Panc1 (cell line): ENCODE measurements at regions of chr17 and their contacts with region 1.

Region 1: DNA sequence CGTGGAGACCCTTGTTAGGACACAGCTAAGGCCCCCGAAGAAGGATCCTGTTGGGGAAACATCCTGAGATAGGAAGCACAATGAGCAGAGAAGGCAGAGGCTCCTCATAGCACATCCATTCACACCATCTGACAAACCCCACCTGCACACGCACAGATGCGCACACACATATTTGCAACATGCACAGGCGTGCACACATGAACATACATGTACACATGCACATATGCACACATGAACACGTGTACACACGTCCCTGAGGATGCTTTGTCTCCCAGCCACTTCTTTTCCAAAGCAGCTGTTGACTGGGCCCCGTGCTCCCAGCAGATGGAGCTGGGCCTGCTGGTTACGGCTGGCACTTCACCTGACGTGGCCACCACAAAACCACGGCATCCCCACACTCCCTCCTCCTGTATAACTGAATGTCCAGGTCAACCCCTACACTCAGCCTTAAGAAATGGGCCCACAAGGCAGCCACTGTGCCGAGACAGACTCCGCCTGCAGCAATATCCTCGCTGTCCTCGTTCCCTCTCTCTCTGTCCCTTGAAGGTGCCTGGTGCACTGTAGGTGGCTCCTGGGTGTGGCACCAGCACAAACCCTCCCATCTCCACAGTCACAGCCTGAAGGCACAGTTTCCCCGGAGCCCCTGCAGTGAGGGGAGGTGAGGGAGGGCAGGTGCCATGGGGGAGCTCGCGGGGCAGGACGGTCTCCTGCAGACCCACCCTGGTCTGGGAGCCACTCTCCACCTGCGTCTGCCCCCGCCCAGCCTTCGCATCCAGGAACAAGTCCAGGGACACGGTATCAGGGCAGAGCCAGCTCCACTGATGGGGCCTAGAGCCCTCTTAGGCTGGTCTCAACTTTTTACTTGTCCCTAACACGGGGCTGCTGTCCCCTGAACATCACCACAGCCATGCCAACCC is 183.0 kb downstream of the RBFOX3 start:
- DNase-seq: no peak
- ATAC-seq: 0 out of 2 replicates have a peak, but pooled peaks have one; percentile 52
- H3K4me3 ChIP-seq: no peak overlapping the region
- H3K27ac ChIP-seq: no peak overlapping the region
- H3K4me1 ChIP-seq: no peaks in the 10 kb centered on the region
- H3K27me3 ChIP-seq: peaks cover 6% of the 10 kb centered on the region; the same call in 1 of the 2 replicates
- CTCF ChIP-seq: no peak

Region 2: GRCh38 chr17:79658811-79659207 is 230.9 kb after region 1 on chr17:
- CTCF ChIA-PET with region 1: no interaction called
- POLR2A ChIA-PET with region 1: no interaction called
- in situ Hi-C with region 1: loop called (anchors 25 kb)
- intact Hi-C with region 1: no loop called
- DNase-seq: no peak
- ATAC-seq: peak; percentile 85
- H3K4me3 ChIP-seq: no peak overlapping the region
- H3K27ac ChIP-seq: no peak overlapping the region
- H3K4me1 ChIP-seq: no peaks in the 10 kb centered on the region
- H3K27me3 ChIP-seq: peaks cover 14% of the 10 kb centered on the region
- CTCF ChIP-seq: peak; percentile 78